ENCODE measurements at regions of chr15 and their contacts with region 1.

Region 1: GRCh38 chr15:87498560-87498959 is 758.0 kb downstream of the NTRK3 start:
- DNase-seq: no peak

Region 2: DNA sequence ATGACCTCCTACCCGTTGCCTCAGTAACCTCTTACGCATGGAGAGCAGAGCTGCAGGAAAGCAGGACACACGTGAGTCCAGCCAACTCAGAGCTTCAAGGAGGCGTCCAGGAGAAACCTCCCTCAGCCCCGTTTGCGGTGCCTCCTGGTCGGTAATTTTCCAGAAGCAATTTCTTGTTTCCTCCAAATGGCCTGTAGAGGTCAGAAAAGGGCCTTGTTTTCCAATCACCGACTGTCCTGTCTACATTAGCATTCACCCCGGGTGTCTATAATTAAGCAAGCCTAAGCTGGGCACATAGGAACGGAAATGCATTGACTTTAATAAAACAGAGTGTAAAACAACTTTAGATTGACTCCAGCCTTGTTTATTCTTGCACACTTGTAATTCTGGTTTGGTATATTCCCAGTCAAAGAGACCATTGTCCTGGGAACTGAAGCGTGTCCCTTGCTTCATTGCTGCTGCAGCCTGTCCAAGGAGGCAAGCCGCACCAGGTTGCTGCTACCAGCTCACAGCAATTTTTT is 582.7 kb before region 1 on chr15:
- intact Hi-C with region 1: loop called (anchors 10 kb)
- DNase-seq: no peak

Region 3: DNA sequence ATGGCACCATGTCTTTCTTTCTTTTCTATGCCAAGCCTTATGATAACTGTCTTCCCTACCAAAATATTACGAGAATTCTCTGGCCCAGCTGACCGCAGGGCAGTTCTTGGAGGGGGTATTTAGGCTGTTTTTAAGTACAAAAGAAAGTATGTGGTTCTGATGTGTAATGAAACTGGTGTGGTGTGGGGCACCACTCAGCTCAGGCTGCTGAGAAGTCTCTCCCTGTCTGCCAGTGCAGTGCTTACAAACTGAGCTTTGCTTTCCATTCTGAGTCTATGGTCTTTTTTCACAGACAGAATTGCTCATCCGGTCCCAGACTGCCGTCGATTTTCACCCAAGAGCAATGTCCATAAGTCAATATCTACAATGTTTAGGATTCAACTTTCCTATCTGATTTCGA is 89.7 kb before region 1 on chr15:
- intact Hi-C with region 1: no loop called
- DNase-seq: no peak

Measured in cardiac septum (tissue), 1 donor.